AG04449 (cell line): ENCODE measurements at regions of chr5 and their contacts with region 1.

Region 1: GRCh38 chr5:91383027-91383955 is at the start of gene ARRDC3:
- DNase-seq: peak; percentile 59
- H3K4me3 ChIP-seq: peak within 1 kb of the TSS; percentile 86
- CTCF ChIP-seq: no peak

Region 2: DNA sequence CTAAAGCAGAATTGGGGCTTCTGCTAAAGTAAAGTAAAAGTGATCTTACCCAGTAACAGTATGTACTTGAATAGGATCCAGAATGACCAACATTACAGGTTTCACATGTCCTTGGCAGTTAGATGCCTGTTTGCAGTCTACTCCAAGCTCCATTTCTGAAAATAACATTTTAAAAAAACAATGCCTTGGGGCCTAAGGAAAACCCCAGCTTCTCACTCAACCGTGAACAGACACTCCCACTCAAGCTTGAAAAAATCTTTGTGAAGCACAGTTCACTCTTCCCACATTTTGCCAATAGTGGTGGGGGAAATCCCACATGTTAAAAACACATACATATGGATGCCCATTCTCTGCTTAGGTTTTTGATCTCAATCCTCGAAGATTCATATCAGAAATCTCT is 304.3 kb before region 1 on chr5:
- CTCF ChIA-PET with region 1: interaction called, 18 read pairs
- POLR2A ChIA-PET with region 1: no interaction called
- DNase-seq: no peak
- H3K4me3 ChIP-seq: no peak overlapping the region
- CTCF ChIP-seq: no peak

Region 3: DNA sequence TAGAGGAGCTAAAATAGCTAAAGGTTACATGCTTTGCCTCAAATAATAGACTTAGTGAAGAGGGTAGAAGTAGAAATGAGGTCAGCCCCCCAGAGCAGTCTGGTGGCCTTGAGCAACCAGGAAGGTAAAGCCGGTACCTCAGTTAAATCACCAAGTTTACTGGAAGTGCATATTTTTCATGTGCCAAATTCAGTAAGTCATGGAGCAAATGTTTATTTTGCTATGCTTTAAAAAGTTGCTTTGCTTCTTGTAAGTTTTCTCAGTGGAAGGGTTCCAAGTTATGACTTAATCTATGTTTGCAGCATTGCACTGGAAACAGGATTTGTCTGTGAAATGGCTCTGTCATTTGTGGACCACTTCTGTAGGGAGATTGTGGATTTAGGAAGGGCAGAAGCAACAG is 256.8 kb before region 1 on chr5:
- CTCF ChIA-PET with region 1: interaction called, 13 read pairs
- POLR2A ChIA-PET with region 1: interaction called, 5 read pairs
- DNase-seq: peak; percentile 75
- H3K4me3 ChIP-seq: no peak overlapping the region
- CTCF ChIP-seq: no peak

Region 4: GRCh38 chr5:91232523-91232922 is 150.8 kb before region 1 on chr5:
- CTCF ChIA-PET with region 1: interaction called, 28 read pairs
- POLR2A ChIA-PET with region 1: no interaction called
- DNase-seq: no peak
- H3K4me3 ChIP-seq: no peak overlapping the region
- CTCF ChIP-seq: no peak

Region 5: DNA sequence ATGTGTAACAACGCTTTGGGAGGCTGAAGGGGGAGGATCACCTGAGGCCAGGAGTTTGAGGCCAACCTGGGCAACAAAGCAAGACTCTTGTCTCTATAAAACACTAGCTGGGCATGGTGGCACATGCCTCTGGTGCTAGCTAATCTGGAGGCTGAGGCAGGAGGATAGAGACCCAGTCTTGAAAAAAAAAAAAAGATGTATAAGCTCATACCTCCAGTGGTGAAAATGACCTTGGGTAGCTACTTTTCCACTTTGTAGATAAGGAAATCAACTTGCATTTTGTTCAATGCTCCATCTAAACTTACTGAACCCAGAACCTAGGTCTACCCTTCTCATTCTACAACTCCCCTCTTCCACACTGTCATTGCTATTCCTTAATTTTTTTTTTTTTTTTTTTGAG is 16.7 kb before region 1 on chr5:
- CTCF ChIA-PET with region 1: interaction called, 10 read pairs
- POLR2A ChIA-PET with region 1: interaction called, 5 read pairs
- DNase-seq: no peak
- H3K4me3 ChIP-seq: no peak overlapping the region
- CTCF ChIP-seq: no peak

Region 6: GRCh38 chr5:91486638-91487037 is 103.3 kb after region 1 on chr5:
- CTCF ChIA-PET with region 1: no interaction called
- POLR2A ChIA-PET with region 1: no interaction called
- DNase-seq: no peak
- H3K4me3 ChIP-seq: no peak overlapping the region
- CTCF ChIP-seq: no peak

Region 7: GRCh38 chr5:91651703-91652102 is 268.4 kb after region 1 on chr5:
- CTCF ChIA-PET with region 1: no interaction called
- POLR2A ChIA-PET with region 1: no interaction called
- DNase-seq: no peak
- H3K4me3 ChIP-seq: no peak overlapping the region
- CTCF ChIP-seq: no peak